PC-3 (cell line): ENCODE measurements at regions of chr11 and their contacts with region 1.

Region 1: GRCh38 chr11:57626895-57627294 is 22.8 kb downstream of the YPEL4 start:
- DNase-seq: no peak
- ATAC-seq: no peak
- H3K4me3 ChIP-seq: no peak overlapping the region
- H3K27ac ChIP-seq: no peak overlapping the region
- H3K4me1 ChIP-seq: no peaks in the 10 kb centered on the region
- H3K27me3 ChIP-seq: no peaks in the 10 kb centered on the region; the same call in 1 of the 2 replicates
- CTCF ChIP-seq: no peak

Region 2: DNA sequence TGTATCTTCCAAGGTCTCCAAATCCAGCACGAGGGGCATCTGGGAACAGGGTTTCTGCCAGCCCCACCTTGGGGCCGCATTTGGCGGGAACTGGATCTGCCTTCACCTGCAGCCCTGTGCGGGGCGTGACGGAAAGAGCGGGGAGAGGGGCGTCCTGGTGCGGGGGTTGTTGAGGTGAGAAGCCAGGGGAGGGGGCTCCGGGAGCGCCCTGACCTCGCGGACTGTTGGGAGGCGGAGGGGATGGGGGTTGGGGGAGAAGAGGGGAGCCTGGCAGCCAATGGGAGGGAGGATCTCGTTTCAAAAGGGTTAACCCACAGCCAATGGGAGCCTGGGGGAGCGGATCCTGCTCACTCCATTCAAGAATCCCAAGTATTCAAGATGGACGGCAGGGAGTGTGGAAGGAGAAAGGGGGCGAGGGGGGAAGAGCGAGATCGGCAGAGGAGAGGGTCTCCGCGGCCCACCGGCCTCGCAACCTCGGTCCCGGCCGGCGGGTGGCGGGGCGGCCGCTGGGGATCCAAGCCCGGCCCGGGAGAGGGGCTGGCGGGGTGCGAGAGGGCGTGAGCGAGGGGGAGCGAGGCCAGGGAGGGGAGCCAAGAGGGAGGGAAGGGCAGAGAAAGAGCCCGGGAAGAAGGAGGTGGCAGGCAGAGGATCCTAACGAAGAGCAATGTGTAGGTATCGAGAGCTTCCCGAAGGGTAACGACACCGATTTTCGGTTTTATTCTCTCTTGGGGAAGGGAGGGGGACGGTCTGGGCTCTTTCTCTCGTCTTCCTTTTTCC is 11.3 kb after region 1 on chr11:
- CTCF ChIA-PET with region 1: interaction called, 10 read pairs
- POLR2A ChIA-PET with region 1: no interaction called
- intact Hi-C with region 1: no loop called
- DNase-seq: peak; percentile 77
- ATAC-seq: peak; percentile 86
- H3K4me3 ChIP-seq: peak overlapping the region; percentile 91
- H3K27ac ChIP-seq: no peak overlapping the region; the same call in 1 of the 2 replicates
- H3K4me1 ChIP-seq: peaks cover 14% of the 10 kb centered on the region
- H3K27me3 ChIP-seq: 0 out of 2 replicates have a peak, but pooled peaks cover 5% of the 10 kb centered on the region
- CTCF ChIP-seq: no peak

Region 3: GRCh38 chr11:57792060-57792541 is 165.2 kb after region 1 on chr11:
- CTCF ChIA-PET with region 1: no interaction called
- POLR2A ChIA-PET with region 1: no interaction called
- intact Hi-C with region 1: no loop called
- DNase-seq: no peak
- ATAC-seq: peak; percentile 3
- H3K4me3 ChIP-seq: no peak overlapping the region
- H3K27ac ChIP-seq: peak overlapping the region; percentile 95
- H3K4me1 ChIP-seq: peaks cover 35% of the 10 kb centered on the region
- H3K27me3 ChIP-seq: no peaks in the 10 kb centered on the region
- CTCF ChIP-seq: no peak

Region 4: DNA sequence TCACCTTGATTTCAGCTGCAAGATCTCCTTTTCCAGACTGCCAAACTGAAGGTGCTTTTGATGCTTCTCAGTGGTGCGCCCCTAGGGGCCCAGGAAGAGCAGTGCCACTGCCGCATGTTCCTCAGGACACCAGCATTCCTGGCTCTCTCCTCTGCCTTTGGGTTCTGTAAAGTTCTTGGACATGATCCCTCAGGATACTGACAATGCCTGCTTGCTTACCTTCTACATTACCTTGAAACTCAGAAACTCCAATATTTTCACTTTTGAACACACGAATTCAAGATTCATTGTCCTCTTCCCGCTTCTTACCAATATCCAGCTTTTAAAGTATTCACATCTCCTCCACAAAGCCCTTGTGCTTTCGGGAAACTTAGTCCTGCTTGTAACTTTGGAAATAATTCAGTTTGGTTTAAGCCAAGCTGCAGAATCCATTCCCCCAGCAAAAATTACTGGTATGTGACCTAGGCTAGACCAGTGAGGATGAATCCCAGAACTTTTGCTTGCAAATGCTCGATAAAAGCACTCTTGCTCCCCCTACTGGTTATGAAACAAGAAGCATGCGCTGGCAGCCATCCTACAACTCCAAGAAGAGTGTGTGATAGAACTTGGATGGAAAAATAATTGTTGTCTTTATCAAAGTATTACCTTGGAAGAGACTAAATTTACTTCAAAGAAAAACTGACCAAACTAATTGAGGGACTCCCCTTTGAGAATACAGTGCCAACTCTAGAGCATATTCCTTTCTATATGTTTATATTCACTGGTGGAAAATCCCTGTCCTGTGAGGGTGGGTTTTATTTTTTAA is 897.5 kb after region 1 on chr11:
- CTCF ChIA-PET with region 1: no interaction called
- POLR2A ChIA-PET with region 1: no interaction called
- intact Hi-C with region 1: no loop called
- DNase-seq: peak; percentile 92
- ATAC-seq: peak; percentile 81
- H3K4me3 ChIP-seq: no peak overlapping the region
- H3K27ac ChIP-seq: no peak overlapping the region
- H3K4me1 ChIP-seq: peaks cover 8% of the 10 kb centered on the region
- H3K27me3 ChIP-seq: no peaks in the 10 kb centered on the region
- CTCF ChIP-seq: peak; percentile 91